ENCODE measurements at regions of chr14 and their contacts with region 1.

Region 1: DNA sequence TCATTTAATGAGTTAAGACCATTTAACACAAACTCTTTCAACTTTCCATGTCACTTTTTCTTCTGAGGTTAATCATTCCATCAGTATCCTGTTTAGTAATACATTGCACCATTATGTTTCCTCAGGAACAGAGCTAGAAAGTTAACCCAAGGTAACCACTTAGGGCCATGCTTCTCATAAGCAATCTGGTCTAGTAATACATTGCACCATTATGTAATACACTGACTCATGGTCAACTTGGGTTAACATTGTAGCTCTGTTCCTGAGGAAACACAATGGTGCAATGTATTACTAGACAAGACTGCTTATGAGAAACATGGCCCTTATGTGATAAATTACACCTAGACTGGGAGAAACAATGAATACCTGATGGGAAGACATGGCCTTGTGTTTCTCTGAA is 21.7 kb downstream of the ERH start:
- DNase-seq: no peak
- H3K4me3 ChIP-seq: no peak overlapping the region
- H3K27ac ChIP-seq: no peak overlapping the region
- H3K4me1 ChIP-seq: no peaks in the 10 kb centered on the region
- H3K27me3 ChIP-seq: no peaks in the 10 kb centered on the region
- CTCF ChIP-seq: no peak
- EP300 ChIP-seq: no peak
- POLR2A ChIP-seq: no peak
- RAD21 ChIP-seq: no peak

Region 2: GRCh38 chr14:69387311-69387710 is 10.9 kb after region 1 on chr14:
- CTCF ChIA-PET with region 1: interaction called, 3 read pairs
- POLR2A ChIA-PET with region 1: interaction called, 131 read pairs
- DNase-seq: no peak
- H3K4me3 ChIP-seq: no peak overlapping the region
- H3K27ac ChIP-seq: no peak overlapping the region
- H3K4me1 ChIP-seq: 0 out of 7 replicates have a peak, but pooled peaks cover 0 to under 1% (median 0%) of the 10 kb centered on the region in 4 experiments
- H3K27me3 ChIP-seq: no peaks in the 10 kb centered on the region
- CTCF ChIP-seq: no peak
- EP300 ChIP-seq: no peak
- POLR2A ChIP-seq: no peak
- RAD21 ChIP-seq: no peak

Region 3: GRCh38 chr14:69475194-69475818 is 98.9 kb after region 1 on chr14:
- CTCF ChIA-PET with region 1: no interaction called
- POLR2A ChIA-PET with region 1: no interaction called
- DNase-seq: no peak
- H3K4me3 ChIP-seq: no peak overlapping the region
- H3K27ac ChIP-seq: no peak overlapping the region
- H3K4me1 ChIP-seq: no peaks in the 10 kb centered on the region
- H3K27me3 ChIP-seq: no peaks in the 10 kb centered on the region
- CTCF ChIP-seq: peak; percentile 40 to 57 (median 45); a peak in 3 of 4 replicates
- EP300 ChIP-seq: no peak
- POLR2A ChIP-seq: no peak
- RAD21 ChIP-seq: peak; percentile 35 to 45

Measured in H1 (cell line).